ENCODE measurements at regions of chr1 and their contacts with region 1.

Region 1: DNA sequence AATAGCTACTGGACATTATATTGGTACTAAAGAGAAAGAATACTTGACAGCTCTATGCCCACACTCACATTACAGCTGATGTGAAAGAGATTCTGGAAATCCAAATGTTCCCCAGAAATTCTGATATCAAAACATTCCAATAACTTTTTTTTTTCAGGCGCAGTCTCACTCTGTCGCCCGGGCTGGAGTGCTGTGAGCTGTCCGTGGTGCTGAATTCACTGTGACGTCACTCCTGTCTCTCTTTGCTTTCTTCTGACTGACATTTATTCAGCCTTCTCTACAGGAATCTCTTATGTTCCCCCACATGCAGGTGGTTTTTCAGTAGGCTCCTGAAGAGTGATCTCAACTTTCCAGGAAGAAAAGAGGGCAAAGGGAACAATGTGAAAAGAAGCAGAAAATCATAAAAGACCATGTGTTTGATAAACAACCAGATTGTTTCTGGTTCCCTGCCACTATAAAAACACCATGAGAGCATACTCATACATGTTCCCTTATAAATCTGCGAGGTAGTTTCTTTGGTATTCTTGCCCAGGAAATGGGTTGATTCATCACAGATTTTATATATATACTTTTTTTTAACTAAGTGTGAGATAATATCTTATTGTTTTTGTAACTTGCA is 6.2 kb downstream of the S100A7A start:
- DNase-seq: peak; percentile 76
- H3K4me3 ChIP-seq: no peak overlapping the region
- H3K27ac ChIP-seq: no peak overlapping the region
- H3K4me1 ChIP-seq: no peaks in the 10 kb centered on the region
- H3K27me3 ChIP-seq: peaks cover 31% of the 10 kb centered on the region
- CTCF ChIP-seq: no peak

Region 2: GRCh38 chr1:153465811-153466636 is 43.5 kb after region 1 on chr1:
- CTCF ChIA-PET with region 1: no interaction called
- POLR2A ChIA-PET with region 1: no interaction called
- intact Hi-C with region 1: loop called (anchors 5 kb)
- DNase-seq: peak; percentile 67
- H3K4me3 ChIP-seq: no peak overlapping the region
- H3K27ac ChIP-seq: no peak overlapping the region
- H3K4me1 ChIP-seq: no peaks in the 10 kb centered on the region
- H3K27me3 ChIP-seq: peaks cover 52% of the 10 kb centered on the region
- CTCF ChIP-seq: peak; percentile 89